H1 (cell line): ENCODE measurements at regions of chr17 and their contacts with region 1.

Region 1: DNA sequence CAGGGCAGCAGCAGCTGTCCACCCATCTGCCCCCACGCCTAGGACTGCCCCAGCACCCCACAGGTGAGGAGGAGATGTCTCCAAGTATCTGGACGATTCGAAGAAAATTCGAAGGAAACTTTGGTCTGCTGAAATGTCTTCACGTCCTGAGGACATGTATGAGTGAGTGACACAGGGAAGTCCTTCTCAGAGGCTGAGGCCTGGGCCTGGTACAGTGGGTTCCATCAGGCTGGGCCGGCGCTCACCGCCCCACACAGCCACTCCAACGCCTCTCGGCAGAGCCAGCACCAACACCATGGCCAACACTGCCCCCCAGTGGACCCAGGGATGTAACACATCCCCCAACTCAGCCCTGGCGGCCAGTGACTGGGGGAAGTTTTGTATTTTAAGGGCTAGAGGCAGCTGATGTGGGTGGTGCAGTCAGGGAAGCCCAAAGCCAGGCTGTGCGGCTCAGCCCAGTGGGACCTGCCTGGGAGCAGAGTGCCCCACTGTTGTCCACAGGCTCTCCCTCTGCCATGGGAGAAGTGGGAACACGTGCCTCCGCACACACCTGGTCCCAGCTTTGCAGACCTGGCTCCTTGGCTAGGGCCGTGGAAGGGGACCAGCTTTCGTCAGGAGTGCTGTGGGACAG is 55.8 kb upstream of the FASN start:
- DNase-seq: peak; percentile 56 to 94
- H3K4me3 ChIP-seq: no peak overlapping the region
- H3K27ac ChIP-seq: no peak overlapping the region
- H3K4me1 ChIP-seq: no peaks in the 10 kb centered on the region
- H3K27me3 ChIP-seq: no peaks in the 10 kb centered on the region
- CTCF ChIP-seq: peak; percentile 95 to 99 (median 99)
- EP300 ChIP-seq: no peak
- POLR2A ChIP-seq: no peak
- RAD21 ChIP-seq: peak; percentile 98 to 100

Region 2: DNA sequence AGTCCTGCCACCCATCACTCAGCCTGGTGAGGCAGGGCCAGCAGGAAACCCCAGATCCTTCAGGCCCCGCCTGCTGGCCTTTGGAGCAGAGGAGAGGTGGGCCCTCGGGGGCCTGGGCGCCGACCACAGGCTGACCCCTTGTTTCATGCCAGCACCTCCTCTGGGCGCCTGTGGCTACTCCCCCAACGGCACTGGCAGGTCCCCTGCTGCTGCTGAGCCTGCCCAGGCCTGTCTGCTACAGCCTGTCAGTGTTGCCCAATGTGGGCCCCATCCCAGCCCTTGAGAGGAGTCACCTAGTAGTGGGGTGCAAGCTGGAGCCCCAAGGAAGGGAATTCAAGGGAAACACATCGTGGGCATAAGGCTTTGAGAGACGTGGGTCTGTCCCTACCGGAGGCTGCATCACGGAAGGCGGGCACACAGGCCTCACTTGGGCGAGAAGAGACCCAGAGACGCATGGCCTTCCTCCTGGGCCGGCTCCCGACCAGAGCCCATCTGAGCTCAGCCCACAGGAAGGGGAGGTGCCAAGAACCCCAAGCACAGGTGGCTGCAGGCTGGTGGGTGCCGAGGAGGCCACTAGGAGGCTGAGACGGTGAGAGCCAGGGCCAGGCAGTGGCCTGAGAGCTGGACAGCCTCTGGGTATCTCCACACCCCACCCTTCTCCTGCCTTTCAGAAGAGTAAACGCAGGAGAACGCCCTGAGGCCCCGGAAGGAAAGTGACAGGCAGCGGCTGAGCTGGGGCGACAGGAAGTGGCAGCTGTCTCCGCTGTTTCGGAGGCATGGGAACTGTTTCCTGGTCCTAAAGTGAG is 47.8 kb before region 1 on chr17:
- CTCF ChIA-PET with region 1: interaction called, 13 read pairs
- POLR2A ChIA-PET with region 1: interaction called, 4 read pairs
- DNase-seq: peak; percentile 43 to 79
- H3K4me3 ChIP-seq: no peak overlapping the region
- H3K27ac ChIP-seq: no peak overlapping the region
- H3K4me1 ChIP-seq: peaks cover 0 to 49% (median 42%) of the 10 kb centered on the region in 4 experiments; a peak in 6 of 7 replicates
- H3K27me3 ChIP-seq: no peaks in the 10 kb centered on the region
- CTCF ChIP-seq: peak; percentile 67 to 70 (median 69)
- EP300 ChIP-seq: no peak
- POLR2A ChIP-seq: no peak; a peak in 1 of 3 replicates
- RAD21 ChIP-seq: peak; percentile 35 to 53

Region 3: DNA sequence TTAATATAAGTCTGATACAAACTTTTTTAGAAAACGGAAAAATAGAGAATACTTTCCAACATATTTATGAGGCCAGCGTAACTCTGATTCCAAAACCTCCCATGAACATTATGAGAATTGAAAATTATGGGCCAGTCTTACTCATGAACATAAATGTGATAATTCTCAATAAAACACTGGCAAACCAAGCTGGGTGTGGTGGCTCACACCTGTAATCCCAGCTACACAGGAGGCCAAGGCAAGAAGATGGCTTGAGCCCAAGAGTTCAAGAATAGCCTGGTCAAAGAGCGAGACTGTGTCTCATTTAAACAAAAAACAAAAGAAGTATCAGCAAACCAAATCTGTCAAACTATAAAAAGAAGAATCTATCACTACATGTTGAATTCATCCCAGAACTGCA is 11.0 kb after region 1 on chr17:
- CTCF ChIA-PET with region 1: interaction called, 10 read pairs
- POLR2A ChIA-PET with region 1: no interaction called
- DNase-seq: no peak
- H3K4me3 ChIP-seq: no peak overlapping the region
- H3K27ac ChIP-seq: no peak overlapping the region
- H3K4me1 ChIP-seq: no peaks in the 10 kb centered on the region
- H3K27me3 ChIP-seq: peaks cover 0 to 3% (median under 1%) of the 10 kb centered on the region in 4 experiments; a peak in 3 of 7 replicates
- CTCF ChIP-seq: no peak
- EP300 ChIP-seq: no peak
- POLR2A ChIP-seq: no peak
- RAD21 ChIP-seq: no peak

Region 4: DNA sequence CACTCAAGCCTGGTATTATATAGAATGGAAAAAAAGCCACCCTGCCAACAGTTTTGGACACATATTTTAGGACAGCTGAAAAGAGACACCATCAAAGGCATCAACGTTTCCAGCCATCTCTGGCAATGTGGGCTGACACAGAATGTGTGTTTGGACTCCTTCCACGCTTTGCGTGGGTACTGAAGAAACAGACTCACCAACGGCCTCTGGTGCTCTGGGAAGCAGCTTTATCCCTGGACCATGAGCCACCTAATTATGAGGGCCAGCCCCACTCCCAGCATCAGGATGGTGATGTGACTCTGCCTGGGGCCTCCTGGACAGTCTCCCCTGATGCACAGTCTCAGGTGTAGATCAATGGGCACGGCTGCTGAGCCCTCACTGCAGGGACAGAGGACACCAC is 30.9 kb after region 1 on chr17:
- CTCF ChIA-PET with region 1: no interaction called
- POLR2A ChIA-PET with region 1: no interaction called
- DNase-seq: no peak
- H3K4me3 ChIP-seq: no peak overlapping the region
- H3K27ac ChIP-seq: no peak overlapping the region
- H3K4me1 ChIP-seq: no peaks in the 10 kb centered on the region
- H3K27me3 ChIP-seq: peaks cover 0 to 2% (median 1%) of the 10 kb centered on the region in 4 experiments; a peak in 3 of 7 replicates
- CTCF ChIP-seq: no peak
- EP300 ChIP-seq: no peak
- POLR2A ChIP-seq: no peak
- RAD21 ChIP-seq: no peak

Region 5: DNA sequence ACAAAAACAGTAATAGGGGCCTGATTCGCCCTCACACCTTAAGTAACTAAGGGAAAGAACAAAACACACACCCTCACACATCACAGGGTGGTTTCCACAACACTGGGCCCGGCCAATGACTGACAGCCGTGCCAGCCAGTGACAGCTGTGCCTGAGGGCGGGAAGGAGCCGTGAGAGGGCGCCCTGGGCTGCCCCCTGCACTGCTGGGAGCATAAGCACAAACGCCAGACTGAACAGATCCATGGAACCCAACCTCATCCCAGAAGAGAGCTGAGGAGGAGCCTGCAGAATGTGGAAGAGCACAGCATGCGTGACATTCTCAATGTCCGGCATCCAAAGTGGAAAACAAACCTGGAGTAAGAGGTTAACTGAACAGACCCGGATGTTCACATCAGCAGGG is 103.6 kb after region 1 on chr17:
- CTCF ChIA-PET with region 1: no interaction called
- POLR2A ChIA-PET with region 1: no interaction called
- DNase-seq: no peak
- H3K4me3 ChIP-seq: no peak overlapping the region
- H3K27ac ChIP-seq: no peak overlapping the region
- H3K4me1 ChIP-seq: no peaks in the 10 kb centered on the region
- H3K27me3 ChIP-seq: no peaks in the 10 kb centered on the region
- CTCF ChIP-seq: no peak
- EP300 ChIP-seq: no peak
- POLR2A ChIP-seq: no peak
- RAD21 ChIP-seq: no peak

Region 6: DNA sequence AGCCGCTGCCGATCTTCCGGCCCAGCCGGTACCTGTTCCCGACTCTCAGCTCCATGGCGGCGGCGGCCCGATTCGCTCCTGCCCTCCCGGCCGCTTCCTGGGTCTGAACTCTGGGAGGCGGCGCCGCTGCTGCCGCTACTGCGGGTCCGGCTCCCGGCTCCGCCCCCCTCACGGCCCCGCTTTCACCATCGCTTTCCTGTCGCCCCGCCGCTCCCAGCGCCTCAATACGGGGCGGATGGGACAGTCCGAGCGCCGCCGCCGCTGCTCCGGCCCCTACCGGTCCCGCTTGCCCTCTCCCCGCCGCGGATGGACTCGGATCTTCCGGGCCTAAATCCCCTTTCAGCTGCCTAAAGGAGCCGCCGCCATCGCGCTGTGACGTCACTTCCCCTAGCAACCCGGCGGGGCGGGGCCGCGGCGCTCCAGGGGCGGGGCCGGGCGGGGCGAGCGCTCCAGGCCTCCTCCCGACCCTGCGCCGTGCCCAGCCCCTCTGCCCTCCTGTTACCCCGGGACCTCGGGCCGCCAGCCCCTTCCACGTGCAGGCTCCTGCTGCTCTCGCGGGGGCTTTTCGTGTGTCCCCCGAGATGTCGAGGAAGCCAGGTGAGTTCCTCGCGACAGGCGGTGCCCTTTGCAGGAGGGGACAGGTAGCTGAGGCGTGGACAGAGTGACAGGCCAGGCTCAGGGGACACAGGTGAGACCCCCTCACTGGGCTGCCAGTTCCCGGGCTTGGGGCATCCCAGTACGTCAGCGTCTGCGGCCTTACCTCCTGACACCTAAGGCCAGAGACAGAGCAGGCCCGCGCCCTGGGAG is 119.7 kb after region 1 on chr17 and contains the start of gene CSNK1D:
- CTCF ChIA-PET with region 1: no interaction called
- POLR2A ChIA-PET with region 1: no interaction called
- DNase-seq: peak in 1 of 2 experiments; percentile 97
- H3K4me3 ChIP-seq: peak within 1 kb of the TSS; percentile 84 to 95 (median 89)
- H3K27ac ChIP-seq: peak within 1 kb of the TSS; percentile 95; the same call in 1 of the 2 replicates
- H3K4me1 ChIP-seq: peaks cover 0 to 30% (median 7%) of the 10 kb centered on the region in 4 experiments; a peak in 6 of 7 replicates
- H3K27me3 ChIP-seq: peaks cover 0 to 5% (median 5%) of the 10 kb centered on the region in 4 experiments; a peak in 3 of 7 replicates
- CTCF ChIP-seq: no peak
- EP300 ChIP-seq: 0 out of 3 replicates have a peak, but pooled peaks of 1 of the 2 experiments have one; percentile 30
- POLR2A ChIP-seq: peak in 1 of 2 experiments; percentile 70; a peak in 1 of 3 replicates
- RAD21 ChIP-seq: no peak
- total RNA-seq, gene CSNK1D: 103 and 107 TPM in 2 replicates